Keratinocyte (primary cell): ENCODE measurements at regions of chr10 and their contacts with region 1.

Region 1: DNA sequence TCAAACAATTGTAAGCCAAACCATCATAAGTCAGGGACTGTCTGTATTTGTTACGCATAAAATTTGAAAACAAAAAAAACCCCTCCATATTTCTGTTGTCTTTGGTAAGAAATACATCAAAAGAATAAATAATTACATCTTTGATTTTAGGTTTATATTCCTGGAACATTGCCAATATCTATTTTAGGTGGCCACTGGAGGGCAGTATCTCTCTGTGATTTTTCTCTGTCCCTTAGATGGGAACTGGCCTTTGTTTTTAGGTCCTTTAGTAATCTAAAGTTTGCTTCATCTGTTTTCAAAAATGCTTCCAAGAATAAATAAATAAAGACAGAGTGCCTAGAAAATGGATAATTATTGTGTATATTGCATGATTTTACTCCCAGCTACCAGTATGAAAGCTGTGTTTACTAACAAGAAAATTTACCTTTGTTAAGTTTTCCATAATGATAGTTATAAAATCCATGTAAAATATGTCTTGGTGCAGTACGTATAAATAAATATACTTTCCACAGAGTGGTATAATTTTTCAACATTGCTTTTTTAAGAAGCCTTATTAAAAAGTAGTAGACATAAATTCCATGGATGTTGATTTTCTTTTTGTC is 64.2 kb downstream of the PHYHIPL start:
- DNase-seq: no peak
- H3K4me3 ChIP-seq: no peak overlapping the region
- H3K27ac ChIP-seq: no peak overlapping the region
- H3K4me1 ChIP-seq: no peaks in the 10 kb centered on the region
- H3K27me3 ChIP-seq: no peaks in the 10 kb centered on the region
- CTCF ChIP-seq: peak in 2 of 3 experiments; percentile 11 to 28

Region 2: GRCh38 chr10:59606551-59606961 is 365.9 kb after region 1 on chr10:
- dilution Hi-C with region 1: loop called (anchors 25 kb)
- DNase-seq: no peak
- H3K4me3 ChIP-seq: no peak overlapping the region
- H3K27ac ChIP-seq: no peak overlapping the region
- H3K4me1 ChIP-seq: no peaks in the 10 kb centered on the region
- H3K27me3 ChIP-seq: no peaks in the 10 kb centered on the region
- CTCF ChIP-seq: no peak